ENCODE measurements at regions of chr12 and their contacts with region 1.

Region 1: DNA sequence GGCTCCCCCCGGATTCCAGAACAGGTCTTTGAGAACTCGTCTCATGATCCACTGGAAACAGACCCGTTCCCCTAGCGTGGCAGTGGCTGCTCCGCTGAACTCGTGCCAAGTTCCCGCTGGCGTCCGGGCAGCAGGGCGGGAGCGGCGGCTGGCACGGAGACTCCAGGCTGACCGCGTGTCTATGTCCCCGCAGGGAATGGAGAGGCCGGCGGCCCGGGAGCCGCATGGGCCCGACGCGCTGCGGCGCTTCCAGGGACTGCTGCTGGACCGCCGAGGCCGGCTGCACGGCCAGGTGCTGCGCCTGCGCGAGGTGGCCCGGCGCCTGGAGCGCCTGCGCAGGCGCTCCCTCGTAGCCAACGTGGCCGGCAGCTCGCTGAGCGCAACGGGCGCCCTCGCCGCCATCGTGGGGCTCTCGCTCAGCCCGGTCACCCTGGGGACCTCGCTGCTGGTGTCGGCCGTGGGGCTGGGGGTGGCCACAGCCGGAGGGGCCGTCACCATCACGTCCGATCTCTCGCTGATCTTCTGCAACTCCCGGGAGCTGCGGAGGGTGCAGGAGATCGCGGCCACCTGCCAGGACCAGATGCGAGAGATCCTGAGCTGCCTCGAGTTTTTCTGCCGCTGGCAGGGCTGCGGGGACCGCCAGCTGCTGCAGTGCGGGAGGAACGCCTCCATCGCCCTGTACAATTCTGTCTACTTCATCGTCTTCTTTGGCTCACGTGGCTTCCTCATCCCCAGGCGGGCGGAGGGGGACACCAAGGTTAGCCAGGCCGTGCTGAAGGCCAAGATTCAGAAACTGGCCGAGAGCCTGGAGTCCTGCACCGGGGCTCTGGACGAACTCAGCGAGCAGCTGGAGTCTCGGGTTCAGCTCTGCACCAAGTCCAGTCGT is 1.5 kb downstream of the APOLD1 start:
- DNase-seq: peak; percentile 93
- H3K4me3 Mint-ChIP-seq: peak overlapping the region; percentile 89
- H3K27ac Mint-ChIP-seq: peak overlapping the region; percentile 94
- H3K4me1 Mint-ChIP-seq: peaks cover 33% of the 10 kb centered on the region
- H3K27me3 Mint-ChIP-seq: no peaks in the 10 kb centered on the region

Region 2: GRCh38 chr12:12568045-12568444 is 218.9 kb before region 1 on chr12:
- intact Hi-C with region 1: no loop called
- DNase-seq: no peak
- H3K4me3 Mint-ChIP-seq: no peak overlapping the region
- H3K27ac Mint-ChIP-seq: no peak overlapping the region
- H3K4me1 Mint-ChIP-seq: peaks cover 7% of the 10 kb centered on the region
- H3K27me3 Mint-ChIP-seq: peaks cover 2% of the 10 kb centered on the region

Region 3: GRCh38 chr12:12724661-12725545 is 62.1 kb before region 1 on chr12:
- intact Hi-C with region 1: loop called (anchors 2 kb)
- DNase-seq: peak; percentile 96
- H3K4me3 Mint-ChIP-seq: peak overlapping the region; percentile 85
- H3K27ac Mint-ChIP-seq: peak overlapping the region; percentile 98
- H3K4me1 Mint-ChIP-seq: peaks cover 43% of the 10 kb centered on the region
- H3K27me3 Mint-ChIP-seq: peaks cover 3% of the 10 kb centered on the region

Region 4: GRCh38 chr12:12813120-12814101 is 26.5 kb after region 1 on chr12 and contains the start of gene DDX47:
- intact Hi-C with region 1: loop called (anchors 1 kb)
- DNase-seq: peak; percentile 99
- H3K4me3 Mint-ChIP-seq: peak within 1 kb of the TSS; percentile 93
- H3K27ac Mint-ChIP-seq: peak within 1 kb of the TSS; percentile 96
- H3K4me1 Mint-ChIP-seq: peaks cover 48% of the 10 kb centered on the region
- H3K27me3 Mint-ChIP-seq: no peaks in the 10 kb centered on the region
- total RNA-seq, gene DDX47: 123 and 133 TPM in 2 replicates

Region 5: GRCh38 chr12:12899530-12900380 is 112.8 kb after region 1 on chr12:
- intact Hi-C with region 1: loop called (anchors 5 kb)
- DNase-seq: peak; percentile 67
- H3K4me3 Mint-ChIP-seq: no peak overlapping the region
- H3K27ac Mint-ChIP-seq: peak overlapping the region; percentile 79
- H3K4me1 Mint-ChIP-seq: peaks cover 10% of the 10 kb centered on the region
- H3K27me3 Mint-ChIP-seq: peaks cover 3% of the 10 kb centered on the region

Region 6: DNA sequence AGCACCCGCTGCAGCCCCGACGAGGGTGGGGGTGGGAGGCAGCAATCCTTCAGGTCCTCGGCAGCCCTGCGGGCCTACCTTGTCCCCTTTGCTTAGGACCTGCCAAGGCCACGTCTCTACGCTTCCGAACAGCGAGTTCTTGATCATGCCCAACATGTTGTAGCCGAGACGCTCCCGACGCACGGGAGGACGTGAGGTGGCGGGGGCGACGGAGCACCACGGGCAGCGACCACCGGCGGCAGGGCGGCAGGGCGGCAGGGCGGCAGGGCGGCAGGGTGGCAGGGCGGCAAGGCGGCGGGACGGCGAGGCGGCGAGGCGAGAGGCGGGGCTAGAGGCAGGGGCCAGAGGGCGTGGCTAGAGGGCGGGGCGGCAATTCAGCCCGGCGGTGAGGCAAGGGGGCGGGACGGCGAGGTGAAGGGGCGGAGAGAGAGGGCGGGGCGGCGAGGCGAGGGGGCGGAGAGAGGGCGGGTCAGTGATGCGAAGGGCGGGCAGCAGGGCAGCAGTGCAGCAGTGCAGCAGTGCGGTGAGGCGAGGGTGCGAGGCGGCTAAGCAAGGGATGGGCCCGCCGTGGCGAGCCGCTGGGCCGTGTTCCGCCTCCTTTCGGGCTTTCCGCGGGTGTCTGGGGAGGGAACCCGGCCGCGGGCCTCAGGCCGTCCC is 213.1 kb after region 1 on chr12 and contains the start of gene HEBP1:
- intact Hi-C with region 1: loop called (anchors 1 kb)
- DNase-seq: peak; percentile 98
- H3K4me3 Mint-ChIP-seq: peak within 1 kb of the TSS; percentile 91
- H3K27ac Mint-ChIP-seq: peak within 1 kb of the TSS; percentile 89
- H3K4me1 Mint-ChIP-seq: peaks cover 30% of the 10 kb centered on the region
- H3K27me3 Mint-ChIP-seq: peaks cover 25% of the 10 kb centered on the region
- total RNA-seq, gene HEBP1: 12.0 and 13.8 TPM in 2 replicates

Region 7: GRCh38 chr12:14767617-14768016 is 1980.7 kb after region 1 on chr12:
- intact Hi-C with region 1: no loop called
- DNase-seq: no peak
- H3K4me3 Mint-ChIP-seq: peak overlapping the region; percentile 23
- H3K27ac Mint-ChIP-seq: no peak overlapping the region
- H3K4me1 Mint-ChIP-seq: peaks cover 37% of the 10 kb centered on the region
- H3K27me3 Mint-ChIP-seq: no peaks in the 10 kb centered on the region